ENCODE measurements at regions of chr5 and their contacts with region 1.

Region 1: DNA sequence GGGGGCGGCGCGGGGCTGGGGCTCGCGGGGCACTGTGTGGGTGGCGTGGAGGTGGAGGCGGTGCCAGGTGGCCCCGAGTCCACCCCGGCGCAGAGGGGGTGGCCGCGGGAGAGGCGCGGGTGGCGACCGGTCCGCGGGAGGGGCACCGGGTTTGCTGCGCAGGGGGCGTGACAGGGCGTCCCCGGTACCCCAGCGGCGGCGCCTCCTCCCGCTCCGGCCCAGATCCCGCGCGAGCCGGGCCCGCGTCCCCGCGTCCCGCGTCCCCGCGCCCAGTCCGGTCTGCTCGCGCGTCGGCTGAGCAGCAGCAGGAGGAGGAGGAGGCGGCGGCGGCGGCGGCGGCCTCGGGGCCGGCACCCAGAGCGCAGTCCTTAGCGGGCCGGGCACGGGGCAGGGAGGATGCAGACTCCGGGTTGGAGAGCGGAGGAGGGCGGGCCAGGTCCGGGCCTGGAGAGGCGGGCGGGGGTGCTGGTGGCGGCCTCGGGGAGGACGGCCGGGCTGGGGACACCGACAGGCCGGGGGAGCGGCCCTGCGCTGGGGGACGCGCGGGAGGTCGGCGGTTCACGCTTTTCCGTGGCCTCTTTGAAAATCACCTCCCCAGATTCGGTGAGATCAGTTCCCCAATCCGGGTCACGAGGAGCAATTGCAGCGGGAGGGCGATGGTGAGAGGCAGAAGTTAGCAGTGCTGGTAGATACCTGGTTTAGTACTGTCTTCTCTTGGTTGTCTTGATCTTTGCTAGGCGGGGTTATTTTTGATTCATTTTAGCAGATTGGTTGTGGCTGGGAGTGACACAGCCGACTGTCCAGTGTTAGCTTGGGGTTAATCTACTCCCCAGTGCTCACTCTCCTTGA is 1.7 kb downstream of the TRIO start:
- DNase-seq: peak; percentile 59 to 70
- ATAC-seq: peak; percentile 62 to 75 (median 66)
- H3K4me3 ChIP-seq: peak overlapping the region; percentile 70
- H3K4me3 Mint-ChIP-seq: peak overlapping the region; percentile 92
- H3K27ac ChIP-seq: peak overlapping the region; percentile 81
- H3K27ac Mint-ChIP-seq: peak overlapping the region; percentile 68 to 78
- H3K4me1 ChIP-seq: peaks cover 24% of the 10 kb centered on the region
- H3K4me1 Mint-ChIP-seq: peaks cover 21 to 30% of the 10 kb centered on the region in 2 donors
- H3K27me3 ChIP-seq: no peaks in the 10 kb centered on the region
- H3K27me3 Mint-ChIP-seq: peaks cover 2 to 9% of the 10 kb centered on the region in 2 donors
- CTCF ChIP-seq: no peak

Region 2: DNA sequence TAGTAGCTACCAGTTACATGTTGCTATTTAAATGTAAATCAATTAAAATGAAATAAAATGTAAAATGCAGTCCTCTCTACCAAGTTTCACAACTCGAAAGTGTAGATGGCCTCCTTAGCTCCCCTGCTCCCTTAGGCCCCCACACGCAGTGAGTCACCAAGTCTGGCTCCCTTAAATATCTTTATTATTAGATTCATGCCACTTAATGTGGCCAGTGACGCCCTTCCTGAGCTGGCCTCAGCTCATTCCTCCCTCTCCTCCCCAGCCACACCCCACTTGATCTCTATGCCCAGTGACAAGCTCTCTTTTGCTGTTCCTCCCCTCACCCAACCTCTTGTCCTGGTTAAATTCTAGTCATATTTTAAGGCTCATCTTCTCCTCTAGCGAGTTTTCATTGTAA is 111.9 kb before region 1 on chr5:
- intact Hi-C with region 1: no loop called
- DNase-seq: no peak
- ATAC-seq: no peak
- H3K4me3 ChIP-seq: no peak overlapping the region
- H3K4me3 Mint-ChIP-seq: no peak overlapping the region
- H3K27ac ChIP-seq: no peak overlapping the region
- H3K27ac Mint-ChIP-seq: no peak overlapping the region
- H3K4me1 ChIP-seq: no peaks in the 10 kb centered on the region
- H3K4me1 Mint-ChIP-seq: peaks cover 7 to 9% of the 10 kb centered on the region in 2 donors
- H3K27me3 ChIP-seq: no peaks in the 10 kb centered on the region
- H3K27me3 Mint-ChIP-seq: peaks cover 11 to 14% of the 10 kb centered on the region in 2 donors
- CTCF ChIP-seq: no peak

Region 3: DNA sequence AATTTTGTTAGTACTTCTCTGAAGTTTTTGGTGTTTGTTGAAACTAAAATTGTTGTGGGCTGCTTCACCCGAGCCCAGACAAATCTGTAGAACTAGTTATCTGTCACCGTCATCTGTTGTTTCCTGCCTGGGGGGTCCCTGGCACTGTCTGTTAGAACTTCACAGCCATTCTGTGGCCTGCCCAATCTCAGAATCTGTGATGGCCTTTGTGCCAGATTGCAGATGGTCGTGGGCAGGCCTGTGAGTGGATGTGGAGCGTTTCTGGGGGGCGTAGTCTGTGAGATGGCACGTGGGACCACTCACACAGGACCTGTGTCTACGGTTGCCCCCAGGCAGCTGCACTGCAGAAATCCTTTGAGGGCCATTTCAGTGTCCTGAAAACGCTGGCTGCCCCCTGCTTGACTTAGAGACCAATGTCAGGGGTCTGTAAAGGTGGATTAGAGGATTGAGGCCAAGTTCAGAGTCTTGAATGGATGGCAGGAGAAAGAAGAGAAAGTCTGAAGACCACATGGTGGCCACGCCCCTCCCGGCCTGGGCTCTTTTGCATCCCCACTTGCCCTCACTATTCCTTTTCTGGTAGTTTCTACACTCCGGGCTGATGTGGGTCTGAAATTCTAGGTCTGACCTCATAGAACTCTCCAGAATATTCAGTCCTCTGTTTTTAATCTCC is 36.6 kb after region 1 on chr5:
- intact Hi-C with region 1: loop called (anchors 2 kb)
- DNase-seq: no peak
- ATAC-seq: peak in 2 of 3 donors; percentile 52 to 72
- H3K4me3 ChIP-seq: no peak overlapping the region
- H3K4me3 Mint-ChIP-seq: no peak overlapping the region
- H3K27ac ChIP-seq: no peak overlapping the region
- H3K27ac Mint-ChIP-seq: peak overlapping the region in 1 of 2 donors; percentile 37
- H3K4me1 ChIP-seq: peaks cover 5% of the 10 kb centered on the region
- H3K4me1 Mint-ChIP-seq: peaks cover 17 to 28% of the 10 kb centered on the region in 2 donors
- H3K27me3 ChIP-seq: no peaks in the 10 kb centered on the region
- H3K27me3 Mint-ChIP-seq: no peaks in the 10 kb centered on the region
- CTCF ChIP-seq: no peak

Region 4: GRCh38 chr5:14264604-14265316 is 120.0 kb after region 1 on chr5:
- intact Hi-C with region 1: loop called (anchors 2 kb)
- DNase-seq: peak; percentile 81 to 87
- ATAC-seq: peak; percentile 84 to 92 (median 91)
- H3K4me3 ChIP-seq: peak overlapping the region; percentile 19
- H3K4me3 Mint-ChIP-seq: peak overlapping the region; percentile 77
- H3K27ac ChIP-seq: no peak overlapping the region
- H3K27ac Mint-ChIP-seq: peak overlapping the region; percentile 66 to 88
- H3K4me1 ChIP-seq: peaks cover 22% of the 10 kb centered on the region
- H3K4me1 Mint-ChIP-seq: peaks cover 25 to 46% of the 10 kb centered on the region in 2 donors
- H3K27me3 ChIP-seq: no peaks in the 10 kb centered on the region
- H3K27me3 Mint-ChIP-seq: no peaks in the 10 kb centered on the region
- CTCF ChIP-seq: no peak